A673 (cell line): ENCODE measurements at regions of chr16 and their contacts with region 1.

Region 1: GRCh38 chr16:24516900-24517669 is 22.3 kb upstream of the RBBP6 start:
- DNase-seq: peak; percentile 90
- H3K4me3 ChIP-seq: peak overlapping the region; percentile 18
- H3K27ac ChIP-seq: no peak overlapping the region
- H3K4me1 ChIP-seq: peaks cover 5% of the 10 kb centered on the region
- H3K27me3 ChIP-seq: no peaks in the 10 kb centered on the region
- CTCF ChIP-seq: peak; percentile 92

Region 2: GRCh38 chr16:24151482-24151939 is 365.6 kb before region 1 on chr16:
- CTCF ChIA-PET with region 1: no interaction called
- POLR2A ChIA-PET with region 1: no interaction called
- intact Hi-C with region 1: no loop called
- DNase-seq: peak; percentile 92
- H3K4me3 ChIP-seq: no peak overlapping the region
- H3K27ac ChIP-seq: peak overlapping the region; percentile 63
- H3K4me1 ChIP-seq: peaks cover 11% of the 10 kb centered on the region
- H3K27me3 ChIP-seq: no peaks in the 10 kb centered on the region
- CTCF ChIP-seq: no peak

Region 3: DNA sequence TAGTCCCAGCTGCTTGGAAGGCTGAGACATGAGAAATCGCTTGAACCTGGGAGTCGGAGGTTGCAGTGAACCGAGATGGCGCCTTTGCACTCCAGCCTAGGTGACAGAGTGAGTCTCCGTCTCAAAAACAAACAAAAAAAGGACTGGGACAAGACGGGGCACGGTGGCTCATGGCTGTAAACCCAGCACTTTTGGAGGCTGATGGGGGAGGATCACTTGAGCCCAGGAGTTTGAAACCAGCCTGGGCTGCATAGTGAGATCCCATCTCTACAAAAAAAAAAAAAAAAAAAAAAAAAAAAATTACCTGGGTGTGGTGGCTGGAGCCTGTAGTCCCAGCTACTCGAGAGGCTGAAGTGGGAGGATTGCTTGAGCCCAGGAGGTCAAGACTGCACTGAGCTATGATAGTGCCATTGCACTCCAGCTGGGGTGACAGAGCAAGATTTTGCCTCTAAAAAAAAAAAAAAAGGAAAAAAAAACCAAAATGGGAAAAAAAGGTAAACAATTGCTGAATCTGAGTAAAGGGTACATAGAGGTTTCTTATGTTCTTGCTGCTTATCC is 16.2 kb after region 1 on chr16:
- CTCF ChIA-PET with region 1: interaction called, 15 read pairs
- POLR2A ChIA-PET with region 1: interaction called, 3 read pairs
- intact Hi-C with region 1: no loop called
- DNase-seq: no peak
- H3K4me3 ChIP-seq: no peak overlapping the region
- H3K27ac ChIP-seq: no peak overlapping the region
- H3K4me1 ChIP-seq: peaks cover 4% of the 10 kb centered on the region
- H3K27me3 ChIP-seq: no peaks in the 10 kb centered on the region
- CTCF ChIP-seq: no peak

Region 4: DNA sequence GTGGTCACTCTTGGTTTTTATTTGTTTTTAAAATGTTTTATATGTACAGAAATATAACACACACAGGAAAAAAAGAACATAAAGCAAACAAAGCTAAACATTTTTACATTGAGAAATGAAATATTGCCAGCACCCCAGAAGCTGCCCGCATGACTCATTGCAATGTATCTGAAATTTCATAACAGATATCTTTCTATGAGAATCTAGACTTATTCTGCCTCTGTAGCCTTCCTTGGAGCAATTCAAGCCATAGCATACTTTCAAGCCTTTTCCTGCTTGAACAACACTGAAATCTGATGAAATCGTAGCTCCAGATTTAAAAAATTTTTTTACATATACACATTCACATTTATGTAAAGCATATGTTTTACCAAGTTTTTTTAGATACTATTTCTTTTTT is 109.2 kb after region 1 on chr16:
- CTCF ChIA-PET with region 1: no interaction called
- POLR2A ChIA-PET with region 1: no interaction called
- intact Hi-C with region 1: no loop called
- DNase-seq: no peak
- H3K4me3 ChIP-seq: no peak overlapping the region
- H3K27ac ChIP-seq: no peak overlapping the region
- H3K4me1 ChIP-seq: no peaks in the 10 kb centered on the region
- H3K27me3 ChIP-seq: no peaks in the 10 kb centered on the region
- CTCF ChIP-seq: no peak

Region 5: DNA sequence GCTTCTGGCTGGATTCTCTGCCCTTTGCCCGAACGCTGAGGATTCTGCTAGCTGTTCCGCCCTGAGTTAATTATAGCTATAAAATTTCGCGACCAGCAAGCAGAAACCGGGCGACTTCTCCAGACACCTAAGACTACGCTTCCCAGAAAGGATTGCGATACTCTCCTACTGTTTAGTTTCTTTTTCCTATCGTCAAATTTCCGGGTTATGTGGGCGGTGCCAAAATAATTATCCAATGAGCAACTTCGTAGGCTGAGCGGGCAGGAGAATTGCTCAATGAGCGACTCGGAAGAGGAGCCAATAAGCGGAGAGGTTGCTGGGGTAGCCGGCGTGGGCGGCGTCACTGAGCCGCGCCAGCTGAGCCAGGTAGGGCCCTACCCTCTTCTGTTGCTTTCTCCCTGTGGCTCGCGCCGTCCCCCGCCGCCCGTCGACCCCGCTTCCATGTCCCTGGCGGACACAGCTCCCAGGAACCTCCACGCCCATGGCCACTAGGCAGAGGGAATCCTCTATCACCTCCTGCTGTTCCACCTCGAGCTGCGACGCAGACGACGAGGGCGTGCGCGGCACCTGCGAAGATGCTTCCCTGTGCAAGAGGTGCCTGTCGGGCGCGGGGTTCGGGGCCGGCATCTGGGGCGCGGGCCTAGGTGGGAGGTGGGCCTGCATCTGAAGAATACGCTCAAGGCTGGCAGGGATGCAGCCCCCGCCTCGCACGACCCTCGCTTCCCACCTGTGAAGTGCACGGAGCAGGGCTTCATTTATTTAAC is 594.5 kb after region 1 on chr16 and contains the start of gene LCMT1:
- CTCF ChIA-PET with region 1: no interaction called
- POLR2A ChIA-PET with region 1: no interaction called
- intact Hi-C with region 1: loop called (anchors 10 kb)
- DNase-seq: peak; percentile 99
- H3K4me3 ChIP-seq: peak within 1 kb of the TSS; percentile 92
- H3K27ac ChIP-seq: peak within 1 kb of the TSS; percentile 60
- H3K4me1 ChIP-seq: peaks cover 4% of the 10 kb centered on the region
- H3K27me3 ChIP-seq: no peaks in the 10 kb centered on the region
- CTCF ChIP-seq: no peak
- total RNA-seq, gene LCMT1: 55.8 and 56.3 TPM in 2 replicates